ENCODE measurements at regions of chr19 and their contacts with region 1.

Region 1: GRCh38 chr19:19059837-19060611 is 3.8 kb upstream of the SLC25A42 start:
- DNase-seq: no peak
- H3K4me3 ChIP-seq: no peak overlapping the region
- H3K27ac ChIP-seq: no peak overlapping the region
- H3K4me1 ChIP-seq: peaks cover 10 to 25% (median 13%) of the 10 kb centered on the region in 3 donors
- H3K27me3 ChIP-seq: no peaks in the 10 kb centered on the region
- CTCF ChIP-seq: no peak
- POLR2A ChIP-seq: no peak

Region 2: DNA sequence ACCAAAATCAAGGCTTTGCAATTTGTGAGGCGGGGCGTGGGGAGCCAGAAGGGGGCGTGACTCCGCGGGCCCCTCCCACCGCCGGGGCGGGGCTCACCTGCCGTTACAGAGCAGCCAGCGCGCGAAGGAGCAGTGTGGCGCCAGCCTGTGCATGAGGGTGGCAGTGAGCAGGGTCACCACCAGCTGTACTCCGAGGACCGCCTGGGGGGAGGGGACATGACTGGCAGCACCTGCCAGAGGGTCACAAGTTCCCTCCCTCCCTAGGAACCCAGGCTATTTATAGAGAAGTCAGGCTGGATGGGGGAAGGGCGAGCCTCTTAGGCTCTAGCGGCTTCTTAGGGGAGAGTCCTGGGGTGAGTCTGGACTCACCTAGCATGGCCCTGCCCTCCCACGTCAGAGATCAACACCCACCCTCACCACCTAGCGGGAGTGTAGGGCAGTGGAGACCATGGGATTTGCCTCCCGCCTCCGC is 74.7 kb after region 1 on chr19:
- intact Hi-C with region 1: loop called (anchors 5 kb)
- DNase-seq: no peak
- H3K4me3 ChIP-seq: no peak overlapping the region
- H3K27ac ChIP-seq: no peak overlapping the region
- H3K4me1 ChIP-seq: peaks cover 9 to 20% (median 12%) of the 10 kb centered on the region in 3 donors
- H3K27me3 ChIP-seq: no peaks in the 10 kb centered on the region
- CTCF ChIP-seq: no peak
- POLR2A ChIP-seq: no peak

Region 3: DNA sequence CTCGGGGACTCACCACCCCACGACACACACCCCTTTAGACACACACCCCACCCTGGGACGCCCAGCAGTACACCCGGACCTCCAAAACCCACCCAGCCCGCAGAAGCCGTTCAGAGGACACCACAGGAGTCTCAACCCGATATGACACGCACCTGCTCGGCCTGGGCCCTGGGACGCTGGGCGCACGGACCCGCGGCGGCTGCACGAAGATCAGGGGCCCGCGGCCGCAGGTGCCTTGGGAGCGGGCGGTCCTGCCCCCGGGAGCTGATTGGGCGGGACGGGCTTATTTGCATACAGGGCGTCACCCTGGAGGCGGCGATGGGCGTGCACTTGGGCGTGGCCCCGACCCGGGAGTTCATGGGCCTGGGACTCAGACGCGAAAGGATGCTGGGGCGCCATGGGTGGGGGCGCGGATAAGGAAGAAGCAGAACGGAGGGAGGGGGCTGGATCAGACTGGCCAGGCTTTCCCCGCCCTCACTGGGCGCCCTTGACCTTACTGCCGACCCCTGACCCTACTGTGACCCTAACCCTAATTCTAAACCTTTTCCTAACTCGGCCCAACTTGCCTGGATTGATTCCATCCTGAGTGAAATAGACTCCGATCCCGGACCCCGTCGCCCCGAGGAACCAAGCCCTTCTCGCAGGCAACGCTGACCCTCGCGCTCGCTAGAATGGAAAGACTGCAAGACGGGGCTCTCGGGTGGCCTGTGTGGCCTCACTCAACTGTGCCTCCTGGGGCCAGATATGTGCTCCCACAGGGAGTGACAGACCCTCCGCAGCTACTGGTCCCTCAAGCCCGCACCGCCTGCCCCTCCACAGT is 110.2 kb after region 1 on chr19 and contains the start of gene MEF2B:
- intact Hi-C with region 1: no loop called
- DNase-seq: peak; percentile 45
- H3K4me3 ChIP-seq: peak within 1 kb of the TSS in 3 of 4 donors; percentile 15 to 58 (median 27)
- H3K27ac ChIP-seq: no peak within 1 kb of the TSS
- H3K4me1 ChIP-seq: peaks cover 0 to 16% (median 13%) of the 10 kb centered on the region in 3 donors
- H3K27me3 ChIP-seq: no peaks in the 10 kb centered on the region
- CTCF ChIP-seq: no peak
- POLR2A ChIP-seq: peak in 1 of 4 donors; percentile 57
- total RNA-seq, gene MEF2B: 0.70 TPM in 1 of 4 donors, not detected in the others